Right ventricle myocardium superior (tissue), 1 donor: ENCODE measurements at regions of chr7 and their contacts with region 1.

Region 1: DNA sequence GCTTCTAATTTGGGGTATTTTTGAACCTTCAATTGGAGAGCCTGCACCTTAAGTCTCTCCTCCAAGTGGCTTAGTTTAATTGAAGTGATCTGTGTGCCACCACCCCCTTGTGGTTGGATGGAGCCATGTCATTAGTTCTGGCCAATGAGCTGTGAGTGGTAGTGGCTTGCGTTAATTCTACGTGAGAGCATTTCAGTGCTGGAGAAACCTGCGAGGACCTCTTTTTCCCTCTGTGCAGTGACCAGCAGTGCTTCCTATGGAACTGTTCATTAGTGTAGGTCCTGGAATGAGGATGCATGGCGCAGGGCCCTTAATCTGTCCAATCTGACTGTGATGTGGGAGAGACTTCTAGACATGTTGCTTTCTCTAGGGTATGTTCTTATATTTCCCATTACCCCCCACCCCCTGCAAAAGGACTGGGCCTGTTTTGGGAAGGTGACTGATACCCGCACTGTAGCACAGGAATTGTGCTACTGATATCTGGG is 3.8 kb downstream of the HILPDA start:
- DNase-seq: peak; percentile 64
- ATAC-seq: peak; percentile 30

Region 2: DNA sequence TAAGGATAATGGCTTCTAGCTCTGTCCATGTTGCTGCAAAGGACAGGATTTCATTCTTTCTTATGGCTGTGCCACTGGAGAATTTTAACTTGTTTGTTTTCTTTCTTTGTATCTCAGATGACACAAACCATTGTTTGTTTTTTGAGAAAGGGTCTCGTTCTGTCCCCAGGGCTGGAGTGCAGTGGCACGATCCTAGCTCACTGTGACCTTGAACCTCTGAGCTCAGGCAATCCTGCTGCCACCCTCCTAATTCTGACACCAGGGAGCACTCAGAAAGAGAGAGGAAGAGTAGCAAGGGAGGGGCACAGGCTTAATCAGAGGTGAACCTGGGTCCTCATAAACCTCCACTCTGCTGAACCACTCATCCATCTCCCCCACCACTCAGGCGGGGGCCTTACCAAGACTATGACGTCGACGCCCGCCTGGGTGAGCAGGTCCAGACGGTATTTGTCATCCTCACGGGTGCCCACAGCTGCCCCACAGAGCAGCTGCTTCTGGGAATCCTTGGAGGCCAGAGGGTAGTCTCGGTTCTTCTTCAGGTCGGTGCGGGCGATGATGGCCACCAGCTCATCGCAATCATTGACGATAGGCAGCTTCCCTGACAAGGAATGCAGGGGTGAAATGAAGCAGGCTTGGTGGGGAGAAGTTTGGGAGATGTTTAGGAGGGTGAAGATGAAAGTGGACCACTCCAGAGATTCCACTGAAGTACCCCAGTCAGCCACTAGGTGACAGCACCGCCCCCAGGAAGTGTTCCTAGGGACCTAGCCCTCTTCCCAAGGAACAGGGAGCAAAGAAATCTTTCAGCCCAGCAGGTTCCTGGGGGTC is 61.2 kb before region 1 on chr7:
- intact Hi-C with region 1: no loop called
- DNase-seq: peak; percentile 69
- ATAC-seq: peak; percentile 77

Region 3: GRCh38 chr7:128425850-128426249 is 33.6 kb before region 1 on chr7:
- intact Hi-C with region 1: loop called (anchors 2 kb)
- DNase-seq: peak; percentile 70
- ATAC-seq: peak; percentile 68